HEK293 (cell line): ENCODE measurements at regions of chr2 and their contacts with region 1.

Region 1: GRCh38 chr2:186503848-186504606 is 18.0 kb downstream of the ZC3H15 start:
- H3K4me3 ChIP-seq: no peak overlapping the region
- H3K27ac ChIP-seq: no peak overlapping the region
- H3K4me1 ChIP-seq: no peaks in the 10 kb centered on the region
- CTCF ChIP-seq: 0 out of 2 replicates have a peak, but pooled peaks have one; percentile 7

Region 2: GRCh38 chr2:186440537-186440936 is 63.5 kb before region 1 on chr2:
- CTCF ChIA-PET with region 1: no interaction called
- POLR2A ChIA-PET with region 1: no interaction called
- H3K4me3 ChIP-seq: no peak overlapping the region
- H3K27ac ChIP-seq: no peak overlapping the region
- H3K4me1 ChIP-seq: no peaks in the 10 kb centered on the region
- CTCF ChIP-seq: no peak

Region 3: DNA sequence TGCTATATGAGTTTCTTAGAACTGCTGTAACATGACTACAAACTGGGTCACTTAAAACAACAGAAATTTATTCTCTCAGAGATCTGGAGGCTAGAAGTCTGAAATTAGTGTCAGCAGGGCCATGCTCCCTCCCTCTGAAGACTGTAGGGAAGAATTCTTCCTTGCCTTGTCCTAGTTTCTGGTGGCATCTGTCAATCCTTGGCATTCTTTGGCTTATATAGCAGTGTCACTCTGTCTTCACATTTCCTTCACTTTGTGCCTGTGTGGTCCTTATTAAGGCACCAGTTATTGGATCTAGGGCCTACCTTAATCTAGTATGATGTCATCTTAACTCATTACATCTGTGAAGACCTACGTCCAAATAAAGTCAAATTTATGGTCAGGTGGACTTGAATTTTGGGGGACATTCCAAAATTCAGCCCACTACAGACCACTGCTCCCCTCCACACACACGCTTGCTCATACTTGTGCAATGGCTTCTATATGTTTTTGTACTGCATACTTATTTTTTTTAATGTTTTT is 10.4 kb before region 1 on chr2:
- CTCF ChIA-PET with region 1: interaction called, 21 read pairs
- POLR2A ChIA-PET with region 1: no interaction called
- H3K4me3 ChIP-seq: no peak overlapping the region
- H3K27ac ChIP-seq: no peak overlapping the region
- H3K4me1 ChIP-seq: peaks cover 3% of the 10 kb centered on the region
- CTCF ChIP-seq: no peak